ENCODE measurements at regions of chr13 and their contacts with region 1.

Region 1: GRCh38 chr13:29595380-29596063 is at the start of gene SLC7A1:
- DNase-seq: peak; percentile 92
- total RNA-seq, gene SLC7A1: 47.7 to 63.5 TPM

Region 2: GRCh38 chr13:29196409-29197074 is 399.0 kb before region 1 on chr13:
- intact Hi-C with region 1: no loop called
- DNase-seq: no peak

Region 3: DNA sequence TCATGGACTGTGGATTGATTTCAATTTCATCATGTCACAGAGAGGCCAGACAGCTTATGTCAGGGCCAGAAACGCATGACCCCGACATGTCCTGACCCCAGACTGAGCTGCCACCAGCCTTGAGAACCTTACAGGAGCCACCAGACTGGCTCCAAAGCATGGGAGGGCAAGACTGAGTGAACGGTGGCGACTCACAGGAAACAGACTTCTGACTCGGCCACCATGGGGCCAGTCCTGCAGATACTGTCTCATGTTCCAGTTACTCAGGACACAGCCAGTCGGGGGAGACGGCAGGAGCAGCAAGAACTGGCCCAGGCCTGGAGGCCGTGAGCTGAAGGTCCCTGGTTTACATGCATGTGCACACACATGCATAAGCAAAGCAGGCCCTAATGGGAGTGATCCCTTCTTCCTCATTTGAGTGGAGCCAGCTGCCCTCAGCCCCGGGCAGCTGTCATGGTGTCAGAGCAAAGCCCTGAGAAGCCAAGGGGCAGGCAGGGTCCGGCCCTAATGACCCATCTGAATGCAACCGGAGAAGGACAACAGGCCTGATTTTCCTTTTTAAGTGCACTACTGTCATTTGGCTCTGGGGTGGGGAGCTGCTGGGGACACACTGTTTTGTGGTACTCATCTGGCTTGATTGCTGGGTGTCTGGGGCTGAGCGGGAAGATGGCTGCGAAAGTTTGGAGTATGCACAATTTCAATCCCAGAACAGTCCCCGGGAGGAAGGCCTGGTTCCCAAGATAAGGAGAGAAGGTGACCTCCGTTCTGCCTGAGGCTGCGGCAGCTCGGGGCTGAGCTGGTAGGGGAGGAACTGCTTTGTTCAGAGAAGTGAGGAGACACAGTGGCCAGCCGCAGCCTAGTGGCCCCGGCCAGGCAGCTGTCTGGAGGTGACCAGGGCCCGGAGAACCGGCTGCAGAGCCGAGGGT is 81.9 kb before region 1 on chr13:
- intact Hi-C with region 1: loop called in 1 of 2 experiments (anchors 10 kb)
- DNase-seq: no peak

Region 4: DNA sequence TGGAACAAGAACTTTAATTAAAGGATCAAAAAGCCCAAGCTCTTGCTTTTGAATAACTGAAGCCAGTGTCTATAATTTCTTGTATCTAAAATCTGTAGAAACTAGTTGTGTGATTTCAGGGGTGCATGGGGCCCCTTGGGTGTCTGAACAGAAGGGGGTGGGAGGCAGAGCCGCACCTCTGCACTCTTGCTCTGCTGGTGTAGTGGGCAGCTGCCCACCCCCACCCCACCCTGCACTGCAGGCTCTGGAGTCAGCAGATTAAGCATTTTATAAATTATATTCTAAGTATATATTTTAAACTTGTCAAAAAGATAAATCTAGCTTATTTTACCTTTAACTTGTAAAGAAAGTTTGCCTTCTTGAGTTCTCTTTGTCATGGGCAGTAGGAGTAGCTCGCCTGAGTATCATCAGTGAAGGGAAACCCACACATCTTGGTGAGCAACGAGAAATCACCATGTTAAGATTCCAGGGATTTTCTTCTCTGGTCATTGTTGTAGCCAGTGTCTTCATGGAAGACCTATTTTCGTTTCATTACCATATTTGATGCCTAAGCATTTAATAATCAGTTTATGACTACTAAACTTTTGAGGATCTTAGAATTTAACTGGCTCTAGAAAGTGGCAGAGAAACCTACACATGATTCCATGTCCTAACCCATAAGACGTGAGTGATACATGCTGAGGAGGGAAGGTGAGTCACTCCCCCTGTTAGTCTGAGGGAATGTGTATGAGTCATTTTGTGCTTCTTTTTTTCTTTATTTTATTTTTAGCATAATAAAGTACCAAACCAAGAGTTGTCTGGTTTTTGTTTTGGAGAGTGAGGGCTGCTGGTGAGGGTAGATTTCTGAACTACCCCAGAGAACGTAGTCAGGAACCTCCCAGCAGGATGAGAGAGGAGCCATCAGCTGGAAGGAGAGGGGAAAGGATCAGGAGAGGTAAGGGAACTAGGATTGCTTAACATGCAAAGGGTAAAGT is 834.5 kb after region 1 on chr13:
- intact Hi-C with region 1: loop called in 1 of 2 experiments (anchors 10 kb)
- DNase-seq: no peak

Measured in posterior vena cava (tissue), 2 donors.